ENCODE measurements at regions of chr7 and their contacts with region 1.

Region 1: GRCh38 chr7:159030490-159031134 is 114.1 kb downstream of the VIPR2 start:
- DNase-seq: peak; percentile 71
- ATAC-seq: peak; percentile 73 to 76

Region 2: GRCh38 chr7:159143780-159144757 is 113.5 kb after region 1 on chr7:
- intact Hi-C with region 1: loop called in 1 of 2 experiments (anchors 5 kb)
- DNase-seq: peak; percentile 43
- ATAC-seq: peak; percentile 67 to 72

Measured in left cardiac atrium (tissue), 4 donors.